Activated CD8-positive, alpha-beta T cell treated with anti-CD3 and anti-CD28 coated beads, Interleukin-2, amount 10 ng/mL, durations not matched to agents 7 days and 5 days (primary cell): ENCODE measurements at regions of chr20 and their contacts with region 1.

Region 1: GRCh38 chr20:46545077-46545826 is 5.2 kb downstream of the OCSTAMP start:
- DNase-seq: peak; percentile 79
- ATAC-seq: peak; percentile 87
- H3K4me3 Mint-ChIP-seq: peak overlapping the region; percentile 68
- H3K27ac Mint-ChIP-seq: peak overlapping the region; percentile 97
- H3K4me1 Mint-ChIP-seq: peaks cover 8% of the 10 kb centered on the region
- H3K27me3 Mint-ChIP-seq: peaks cover 10% of the 10 kb centered on the region

Region 2: GRCh38 chr20:46530640-46531039 is 14.6 kb before region 1 on chr20:
- CTCF ChIA-PET with region 1: interaction called, 11 read pairs
- POLR2A ChIA-PET with region 1: no interaction called
- DNase-seq: no peak
- ATAC-seq: no peak
- H3K4me3 Mint-ChIP-seq: no peak overlapping the region
- H3K27ac Mint-ChIP-seq: peak overlapping the region; percentile 8
- H3K4me1 Mint-ChIP-seq: no peaks in the 10 kb centered on the region
- H3K27me3 Mint-ChIP-seq: peaks cover 30% of the 10 kb centered on the region

Region 3: GRCh38 chr20:46562373-46563169 is 17.3 kb after region 1 on chr20:
- CTCF ChIA-PET with region 1: interaction called, 90 read pairs
- POLR2A ChIA-PET with region 1: no interaction called
- DNase-seq: peak; percentile 80
- ATAC-seq: peak; percentile 75
- H3K4me3 Mint-ChIP-seq: no peak overlapping the region
- H3K27ac Mint-ChIP-seq: no peak overlapping the region
- H3K4me1 Mint-ChIP-seq: peaks cover 30% of the 10 kb centered on the region
- H3K27me3 Mint-ChIP-seq: peaks cover 10% of the 10 kb centered on the region

Region 4: GRCh38 chr20:46572153-46572552 is 26.9 kb after region 1 on chr20:
- CTCF ChIA-PET with region 1: interaction called, 13 read pairs
- POLR2A ChIA-PET with region 1: interaction called, 3 read pairs
- DNase-seq: no peak
- ATAC-seq: no peak
- H3K4me3 Mint-ChIP-seq: no peak overlapping the region
- H3K27ac Mint-ChIP-seq: no peak overlapping the region
- H3K4me1 Mint-ChIP-seq: peaks cover 16% of the 10 kb centered on the region
- H3K27me3 Mint-ChIP-seq: peaks cover 22% of the 10 kb centered on the region

Region 5: GRCh38 chr20:46681032-46681854 is 136.0 kb after region 1 on chr20:
- CTCF ChIA-PET with region 1: interaction called, 79 read pairs
- POLR2A ChIA-PET with region 1: no interaction called
- DNase-seq: peak; percentile 82
- ATAC-seq: peak; percentile 80
- H3K4me3 Mint-ChIP-seq: no peak overlapping the region
- H3K27ac Mint-ChIP-seq: peak overlapping the region; percentile 30
- H3K4me1 Mint-ChIP-seq: peaks cover 21% of the 10 kb centered on the region
- H3K27me3 Mint-ChIP-seq: no peaks in the 10 kb centered on the region

Region 6: DNA sequence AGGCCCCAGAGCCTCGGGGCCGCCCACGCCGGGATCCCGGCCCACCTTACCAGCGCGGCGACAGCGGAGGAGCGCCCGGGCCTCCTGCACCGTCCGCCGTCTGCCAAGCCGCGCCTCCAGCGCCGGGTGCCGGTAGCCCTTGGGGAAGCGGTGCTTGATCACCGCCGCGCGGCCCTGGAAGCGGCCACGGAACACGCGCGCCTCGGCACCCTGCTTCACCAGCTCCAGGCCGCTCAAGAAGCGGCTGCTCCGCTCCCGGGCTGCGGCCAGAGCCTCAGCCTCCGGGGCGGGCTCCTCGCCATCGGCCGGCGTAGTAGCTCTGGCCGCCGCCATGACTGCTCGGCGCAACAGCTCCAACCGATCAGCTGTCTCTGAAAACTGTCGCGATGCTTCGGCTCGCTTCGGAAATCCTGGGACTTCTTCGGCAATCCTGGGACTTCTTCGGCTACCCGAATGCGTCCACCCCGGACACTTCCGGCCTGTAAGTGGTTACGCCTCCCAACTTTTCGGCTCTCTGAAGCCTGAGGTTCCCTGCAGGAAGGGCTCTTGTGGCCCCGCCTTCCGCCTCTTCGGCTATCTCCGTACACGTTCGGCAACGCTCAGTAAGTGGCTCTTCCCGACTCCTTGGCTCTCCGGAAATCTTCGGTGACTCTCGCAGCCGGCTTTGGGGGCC is 144.0 kb after region 1 on chr20 and contains the start of gene TP53RK:
- CTCF ChIA-PET with region 1: interaction called, 79 read pairs
- POLR2A ChIA-PET with region 1: interaction called, 5 read pairs
- DNase-seq: peak; percentile 98
- ATAC-seq: peak; percentile 99
- H3K4me3 Mint-ChIP-seq: peak within 1 kb of the TSS; percentile 85
- H3K27ac Mint-ChIP-seq: peak within 1 kb of the TSS; percentile 88
- H3K4me1 Mint-ChIP-seq: peaks cover 43% of the 10 kb centered on the region
- H3K27me3 Mint-ChIP-seq: no peaks in the 10 kb centered on the region
- total RNA-seq, gene TP53RK: 15.8 to 15.9 TPM